Activated T-helper 1 cell treated with anti-CD3 and anti-CD28 coated beads, Interleukin-12 subunit alpha, Interleukin-12 subunit beta, Interleukin-2, Interleukin-4 antibody, amounts not matched to agents 30 ng/mL and 10 ng/mL and 1 ng/mL, durations not matched to agents 14 hours and 24 hours and 36 hours (primary cell): ENCODE measurements at regions of chr12 and their contacts with region 1.

Region 1: DNA sequence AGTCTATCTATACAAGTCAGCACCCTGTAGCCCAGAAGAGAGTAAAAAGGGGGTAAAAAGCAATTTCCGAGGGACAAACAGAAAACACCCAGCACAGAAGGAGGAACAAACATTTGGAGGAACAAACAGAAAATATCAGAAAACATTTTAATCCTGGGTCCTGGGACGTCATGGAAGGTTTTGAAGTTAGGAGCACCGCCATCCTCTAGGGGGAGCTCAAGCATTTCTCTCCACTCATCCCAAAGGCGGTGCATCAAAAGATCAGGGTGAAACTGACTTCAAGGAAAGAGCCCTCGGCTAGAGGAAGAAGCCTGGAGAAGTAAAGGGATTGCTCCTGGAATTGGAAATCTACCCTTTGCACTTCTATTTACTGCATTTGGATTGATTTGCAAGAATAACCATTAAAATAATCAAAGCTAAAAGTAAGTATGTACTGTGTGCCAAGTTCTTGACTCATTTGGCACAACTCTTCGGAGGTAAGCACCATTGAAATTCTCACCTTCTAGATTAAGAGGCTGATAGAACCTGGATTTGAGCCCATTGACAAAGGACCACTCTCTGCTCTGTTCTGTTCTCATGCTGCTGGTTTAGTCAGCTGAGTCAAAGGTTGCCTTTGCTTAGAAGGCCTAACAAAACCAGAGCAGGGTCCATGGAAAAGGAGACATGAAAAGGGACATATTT is 17.2 kb upstream of the POC1B start:
- DNase-seq: peak; percentile 43
- H3K4me3 Mint-ChIP-seq: no peak overlapping the region
- H3K27ac Mint-ChIP-seq: no peak overlapping the region
- H3K4me1 Mint-ChIP-seq: peaks cover 10% of the 10 kb centered on the region
- H3K27me3 Mint-ChIP-seq: no peaks in the 10 kb centered on the region

Region 2: GRCh38 chr12:89345830-89346740 is 197.0 kb before region 1 on chr12:
- intact Hi-C with region 1: no loop called
- DNase-seq: peak; percentile 53
- H3K4me3 Mint-ChIP-seq: peak overlapping the region; percentile 80
- H3K27ac Mint-ChIP-seq: peak overlapping the region; percentile 88
- H3K4me1 Mint-ChIP-seq: peaks cover 70% of the 10 kb centered on the region
- H3K27me3 Mint-ChIP-seq: no peaks in the 10 kb centered on the region

Region 3: GRCh38 chr12:89451841-89452251 is 91.2 kb before region 1 on chr12:
- intact Hi-C with region 1: no loop called
- DNase-seq: no peak
- H3K4me3 Mint-ChIP-seq: no peak overlapping the region
- H3K27ac Mint-ChIP-seq: no peak overlapping the region
- H3K4me1 Mint-ChIP-seq: peaks cover 44% of the 10 kb centered on the region
- H3K27me3 Mint-ChIP-seq: no peaks in the 10 kb centered on the region

Region 4: GRCh38 chr12:89862511-89863179 is 319.6 kb after region 1 on chr12:
- intact Hi-C with region 1: loop called (anchors 5 kb)
- DNase-seq: peak; percentile 44
- H3K4me3 Mint-ChIP-seq: peak overlapping the region; percentile 76
- H3K27ac Mint-ChIP-seq: peak overlapping the region; percentile 95
- H3K4me1 Mint-ChIP-seq: peaks cover 60% of the 10 kb centered on the region
- H3K27me3 Mint-ChIP-seq: no peaks in the 10 kb centered on the region

Region 5: GRCh38 chr12:90102957-90103652 is 560.1 kb after region 1 on chr12:
- intact Hi-C with region 1: loop called (anchors 1 kb)
- DNase-seq: no peak
- H3K4me3 Mint-ChIP-seq: no peak overlapping the region
- H3K27ac Mint-ChIP-seq: no peak overlapping the region
- H3K4me1 Mint-ChIP-seq: peaks cover 6% of the 10 kb centered on the region
- H3K27me3 Mint-ChIP-seq: peaks cover 2% of the 10 kb centered on the region

Region 6: DNA sequence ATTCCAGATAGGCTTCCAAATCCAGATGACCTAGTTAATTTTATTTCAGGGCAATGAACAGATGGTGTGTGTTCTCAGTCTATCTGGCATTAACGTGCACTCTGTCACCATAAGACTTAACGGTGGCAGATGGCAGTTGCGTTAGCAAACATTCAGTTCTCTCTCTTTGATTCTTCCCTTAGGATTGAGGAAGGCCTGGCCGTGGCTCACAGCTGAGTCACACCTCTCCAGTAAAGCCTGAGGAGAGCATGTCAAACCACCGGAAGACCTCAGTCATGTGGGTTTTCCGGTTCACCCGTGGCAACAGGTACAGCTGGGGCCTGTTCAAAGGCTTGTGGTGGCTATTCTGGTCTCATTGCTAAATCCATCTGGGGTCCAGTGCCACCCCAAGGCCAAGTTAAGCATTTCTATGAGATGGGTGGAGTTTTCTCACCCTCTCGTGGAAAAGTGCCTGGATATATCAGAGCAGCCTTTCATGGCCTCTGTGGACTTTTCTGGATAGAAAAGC is 710.7 kb after region 1 on chr12:
- intact Hi-C with region 1: loop called (anchors 10 kb)
- DNase-seq: peak; percentile 4
- H3K4me3 Mint-ChIP-seq: no peak overlapping the region
- H3K27ac Mint-ChIP-seq: no peak overlapping the region
- H3K4me1 Mint-ChIP-seq: peaks cover 7% of the 10 kb centered on the region
- H3K27me3 Mint-ChIP-seq: peaks cover 8% of the 10 kb centered on the region

Region 7: DNA sequence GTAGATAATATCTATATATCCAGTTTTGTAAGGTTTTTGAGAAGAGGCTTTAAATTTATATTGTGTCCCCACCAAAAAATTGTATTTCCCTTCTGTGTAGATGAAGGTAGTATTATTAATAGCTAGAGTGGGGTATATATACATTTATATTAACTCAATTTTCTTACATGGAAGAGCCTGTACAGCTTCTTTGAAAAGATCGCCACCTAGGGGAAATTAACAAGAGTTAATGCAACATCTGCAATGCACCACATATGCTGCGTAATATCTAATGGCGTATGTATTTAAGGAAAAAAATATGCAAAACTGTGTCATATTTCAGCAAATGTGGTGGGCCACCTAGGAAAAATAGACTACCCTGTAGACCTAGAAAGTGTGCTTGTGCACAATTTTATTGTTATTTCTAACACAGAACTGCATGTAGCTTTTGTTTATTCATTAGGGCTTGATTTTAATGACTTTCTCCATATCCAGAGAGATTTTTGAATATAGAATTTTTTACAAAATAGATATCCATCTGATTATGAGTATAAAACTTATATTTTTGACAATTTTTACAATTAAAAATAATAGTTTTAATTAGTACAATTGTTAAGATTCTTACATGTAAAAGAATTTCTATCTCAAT is 1397.9 kb after region 1 on chr12:
- intact Hi-C with region 1: loop called (anchors 1 kb)
- DNase-seq: no peak
- H3K4me3 Mint-ChIP-seq: no peak overlapping the region
- H3K27ac Mint-ChIP-seq: no peak overlapping the region
- H3K4me1 Mint-ChIP-seq: no peaks in the 10 kb centered on the region
- H3K27me3 Mint-ChIP-seq: peaks cover 4% of the 10 kb centered on the region